IMR-90 (cell line): ENCODE measurements at regions of chr18 and their contacts with region 1.

Region 1: GRCh38 chr18:26548429-26549262 is at the start of gene KCTD1:
- DNase-seq: peak; percentile 84
- ATAC-seq: peak; percentile 68
- H3K4me3 ChIP-seq: peak within 1 kb of the TSS; percentile 69
- H3K27ac ChIP-seq: peak within 1 kb of the TSS; percentile 16; the same call in 1 of the 2 replicates
- H3K4me1 ChIP-seq: peaks cover 6% of the 10 kb centered on the region
- H3K27me3 ChIP-seq: peaks cover 35% of the 10 kb centered on the region
- CTCF ChIP-seq: no peak
- POLR2A ChIP-seq: no peak
- RAD21 ChIP-seq: no peak
- total RNA-seq, gene KCTD1: 4.7 and 5.0 TPM in 2 replicates

Region 2: GRCh38 chr18:26383454-26384270 is 165.0 kb before region 1 on chr18:
- CTCF ChIA-PET with region 1: interaction called, 5 read pairs
- POLR2A ChIA-PET with region 1: no interaction called
- dilution Hi-C with region 1: no loop called
- in situ Hi-C with region 1: no loop called
- intact Hi-C with region 1: loop called (anchors 1 kb)
- DNase-seq: peak; percentile 67
- ATAC-seq: peak; percentile 79
- H3K4me3 ChIP-seq: no peak overlapping the region
- H3K27ac ChIP-seq: no peak overlapping the region
- H3K4me1 ChIP-seq: no peaks in the 10 kb centered on the region
- H3K27me3 ChIP-seq: no peaks in the 10 kb centered on the region; the same call in 1 of the 2 replicates
- CTCF ChIP-seq: peak; percentile 69
- POLR2A ChIP-seq: no peak
- RAD21 ChIP-seq: peak; percentile 67

Region 3: GRCh38 chr18:26429535-26430226 is 119.0 kb before region 1 on chr18:
- CTCF ChIA-PET with region 1: interaction called, 4 read pairs
- POLR2A ChIA-PET with region 1: no interaction called
- dilution Hi-C with region 1: no loop called
- in situ Hi-C with region 1: no loop called
- intact Hi-C with region 1: loop called (anchors 5 kb)
- DNase-seq: peak; percentile 88
- ATAC-seq: peak; percentile 100
- H3K4me3 ChIP-seq: no peak overlapping the region
- H3K27ac ChIP-seq: no peak overlapping the region
- H3K4me1 ChIP-seq: no peaks in the 10 kb centered on the region
- H3K27me3 ChIP-seq: no peaks in the 10 kb centered on the region; the same call in 1 of the 2 replicates
- CTCF ChIP-seq: no peak
- POLR2A ChIP-seq: no peak
- RAD21 ChIP-seq: no peak

Region 4: GRCh38 chr18:26480897-26481895 is 67.5 kb before region 1 on chr18:
- CTCF ChIA-PET with region 1: no interaction called
- POLR2A ChIA-PET with region 1: no interaction called
- dilution Hi-C with region 1: no loop called
- in situ Hi-C with region 1: loop called (anchors 10 kb)
- intact Hi-C with region 1: loop called (anchors 2 kb)
- DNase-seq: peak; percentile 96
- ATAC-seq: peak; percentile 87
- H3K4me3 ChIP-seq: no peak overlapping the region
- H3K27ac ChIP-seq: peak overlapping the region; percentile 82
- H3K4me1 ChIP-seq: peaks cover 18% of the 10 kb centered on the region
- H3K27me3 ChIP-seq: no peaks in the 10 kb centered on the region
- CTCF ChIP-seq: no peak
- POLR2A ChIP-seq: no peak; the same call in 1 of the 2 replicates
- RAD21 ChIP-seq: 0 out of 2 replicates have a peak, but pooled peaks have one; percentile 2

Region 5: DNA sequence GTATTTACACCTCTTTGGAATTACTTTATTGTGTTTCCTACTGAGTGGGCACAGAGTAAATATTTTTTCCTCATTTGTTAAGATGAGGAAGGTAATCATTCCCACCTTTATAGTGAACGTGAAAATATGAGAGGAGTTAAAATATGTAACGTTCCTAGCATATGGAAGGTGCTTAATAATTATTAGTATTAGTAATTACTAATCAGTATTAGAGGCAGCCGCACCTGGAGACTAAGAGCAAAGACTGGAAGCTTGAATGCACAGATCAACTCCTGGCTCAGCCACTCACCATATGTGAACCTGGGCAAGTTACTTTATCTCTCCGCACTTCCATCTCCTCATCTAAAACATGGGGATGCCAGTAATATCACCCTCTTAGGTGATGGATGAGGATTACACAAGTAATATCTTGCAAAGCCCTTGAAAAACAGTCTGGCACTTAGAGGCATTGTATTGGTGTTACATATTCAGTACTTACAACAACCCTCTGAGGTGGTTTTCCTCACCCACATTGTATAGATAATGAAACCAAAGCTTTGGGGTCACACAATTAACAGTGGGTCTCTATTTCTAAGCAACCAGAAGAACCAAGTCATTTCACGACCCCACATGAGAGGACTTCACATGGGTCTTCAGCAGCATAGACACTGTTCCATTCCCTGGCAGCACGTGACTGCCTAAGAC is 100.0 kb after region 1 on chr18:
- CTCF ChIA-PET with region 1: no interaction called
- POLR2A ChIA-PET with region 1: no interaction called
- dilution Hi-C with region 1: no loop called
- in situ Hi-C with region 1: no loop called
- intact Hi-C with region 1: loop called (anchors 2 kb)
- DNase-seq: no peak
- ATAC-seq: no peak
- H3K4me3 ChIP-seq: no peak overlapping the region
- H3K27ac ChIP-seq: no peak overlapping the region
- H3K4me1 ChIP-seq: no peaks in the 10 kb centered on the region
- H3K27me3 ChIP-seq: peaks cover 9% of the 10 kb centered on the region
- CTCF ChIP-seq: no peak
- POLR2A ChIP-seq: no peak
- RAD21 ChIP-seq: no peak

Region 6: GRCh38 chr18:27276479-27277255 is 728.0 kb after region 1 on chr18:
- CTCF ChIA-PET with region 1: no interaction called
- POLR2A ChIA-PET with region 1: no interaction called
- dilution Hi-C with region 1: no loop called
- in situ Hi-C with region 1: no loop called
- intact Hi-C with region 1: no loop called
- DNase-seq: no peak
- ATAC-seq: no peak
- H3K4me3 ChIP-seq: no peak overlapping the region
- H3K27ac ChIP-seq: no peak overlapping the region
- H3K4me1 ChIP-seq: no peaks in the 10 kb centered on the region
- H3K27me3 ChIP-seq: no peaks in the 10 kb centered on the region
- CTCF ChIP-seq: no peak
- POLR2A ChIP-seq: no peak
- RAD21 ChIP-seq: no peak